Right ventricle myocardium inferior (tissue), 1 donor: ENCODE measurements at regions of chr7 and their contacts with region 1.

Region 1: DNA sequence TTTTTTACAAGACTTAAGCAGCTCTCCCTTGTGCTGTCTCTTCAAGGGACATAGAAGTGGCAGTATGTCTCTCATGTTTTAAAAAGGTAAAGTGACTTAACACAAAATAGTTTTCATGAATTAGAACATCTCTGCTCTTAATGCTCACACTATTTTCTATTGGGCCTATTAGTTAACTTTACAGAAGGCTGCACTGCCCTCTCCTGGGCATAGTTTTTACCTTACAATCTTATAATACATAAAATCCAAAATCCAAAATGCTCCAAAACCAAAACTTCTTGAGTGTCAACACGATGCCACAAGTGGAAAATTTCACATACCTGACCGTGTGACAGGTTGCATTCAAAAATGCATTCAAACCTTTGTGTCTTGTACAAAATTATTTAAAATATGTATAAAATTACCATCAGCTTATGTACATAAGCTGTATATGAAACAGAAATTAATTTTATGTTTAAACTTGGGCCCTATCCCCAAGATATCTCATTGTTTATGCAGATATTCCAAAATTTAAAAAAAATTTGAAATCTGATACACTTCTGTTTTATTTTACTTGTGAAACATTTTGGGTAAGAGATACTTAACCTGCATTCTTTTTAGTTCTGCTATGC is 25.8 kb downstream of the TES start:
- DNase-seq: no peak
- ATAC-seq: no peak

Region 2: DNA sequence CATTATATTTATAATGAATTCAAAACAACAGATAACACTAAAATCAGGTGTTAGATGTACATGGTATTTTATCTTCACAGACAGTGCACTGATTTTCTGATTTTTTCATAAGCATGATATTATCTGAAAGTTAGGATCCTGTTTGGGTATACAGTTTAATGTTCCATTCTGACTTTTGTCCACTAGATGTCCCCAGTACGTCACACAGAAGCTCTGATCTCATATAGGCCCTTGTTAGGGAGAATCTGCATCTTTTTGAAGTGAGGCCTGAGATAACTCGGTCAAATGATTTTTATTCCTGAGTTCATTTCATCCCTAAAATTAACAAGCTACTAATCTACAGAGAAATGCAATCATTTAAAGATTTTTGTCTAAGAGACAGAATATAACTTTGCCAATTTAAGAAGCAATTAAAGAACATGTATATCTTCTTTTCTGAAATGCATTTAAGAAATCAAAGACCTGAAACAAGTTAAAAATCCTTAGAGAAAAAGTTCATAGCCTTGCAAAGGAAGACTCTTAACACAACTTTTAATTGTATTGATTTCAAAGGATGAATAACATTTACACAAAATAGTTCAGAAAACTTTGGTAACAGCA is 97.8 kb before region 1 on chr7:
- intact Hi-C with region 1: loop called (anchors 5 kb)
- DNase-seq: no peak
- ATAC-seq: peak; percentile 82

Region 3: DNA sequence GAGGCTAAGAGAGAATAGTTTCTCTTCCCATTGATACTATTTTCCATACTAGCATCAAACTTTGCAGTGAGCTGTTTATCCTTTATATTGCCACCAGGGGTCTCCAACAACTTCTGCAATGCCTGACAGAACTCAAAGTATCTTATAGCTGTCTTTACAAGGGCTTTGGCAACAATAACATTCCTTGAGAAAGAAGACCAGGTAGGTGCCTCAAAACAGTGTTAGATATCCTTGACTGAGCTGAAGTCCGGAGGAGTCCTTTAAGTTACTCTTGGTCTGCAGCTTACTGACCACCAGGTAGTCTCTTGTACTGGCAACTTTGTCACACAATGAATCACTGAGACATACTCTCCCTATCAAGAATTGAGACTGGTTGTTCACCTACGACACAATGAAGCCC is 55.8 kb before region 1 on chr7:
- intact Hi-C with region 1: loop called (anchors 1 kb)
- DNase-seq: no peak
- ATAC-seq: peak; percentile 34

Region 4: DNA sequence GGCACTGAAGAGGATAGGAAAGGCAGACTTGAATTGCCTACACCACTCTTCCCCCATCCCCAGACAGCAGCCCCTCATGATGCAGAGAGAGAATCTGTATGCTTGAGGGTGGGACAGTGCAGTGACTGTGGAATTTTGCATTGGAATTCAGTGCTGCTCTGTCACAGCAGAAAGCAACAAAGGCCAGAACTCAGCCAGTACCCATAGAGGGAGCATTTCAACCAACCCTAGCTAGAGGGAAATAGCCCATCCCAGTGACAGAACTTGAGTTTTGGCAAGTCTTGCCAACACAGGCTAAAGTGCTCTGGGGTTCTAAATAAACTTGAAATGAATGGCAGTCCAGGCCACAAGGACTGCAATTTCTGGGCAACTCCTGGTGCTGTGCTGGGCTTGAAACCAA is 54.6 kb after region 1 on chr7:
- intact Hi-C with region 1: no loop called
- DNase-seq: no peak
- ATAC-seq: no peak